Naive thymus-derived CD4-positive, alpha-beta T cell (primary cell): ENCODE measurements at regions of chr18 and their contacts with region 1.

Region 1: GRCh38 chr18:35040988-35041814 is at the start of gene MAPRE2:
- DNase-seq: peak; percentile 97 to 100 (median 99)
- ATAC-seq: peak; percentile 91
- H3K4me3 ChIP-seq: peak within 1 kb of the TSS; percentile 80
- H3K4me3 Mint-ChIP-seq: peak within 1 kb of the TSS; percentile 86 to 98 (median 97)
- H3K27ac ChIP-seq: peak within 1 kb of the TSS; percentile 95
- H3K27ac Mint-ChIP-seq: peak within 1 kb of the TSS; percentile 94 to 100 (median 98)
- H3K4me1 ChIP-seq: peaks cover 29 to 41% of the 10 kb centered on the region in 2 donors
- H3K4me1 Mint-ChIP-seq: peaks cover 31 to 73% (median 48%) of the 10 kb centered on the region in 7 donors
- H3K27me3 ChIP-seq: no peaks in the 10 kb centered on the region
- H3K27me3 Mint-ChIP-seq: peaks cover 0 to 3% (median 0%) of the 10 kb centered on the region in 5 donors
- total RNA-seq, gene MAPRE2: 44.7 to 84.4 (median 63.5) TPM

Region 2: DNA sequence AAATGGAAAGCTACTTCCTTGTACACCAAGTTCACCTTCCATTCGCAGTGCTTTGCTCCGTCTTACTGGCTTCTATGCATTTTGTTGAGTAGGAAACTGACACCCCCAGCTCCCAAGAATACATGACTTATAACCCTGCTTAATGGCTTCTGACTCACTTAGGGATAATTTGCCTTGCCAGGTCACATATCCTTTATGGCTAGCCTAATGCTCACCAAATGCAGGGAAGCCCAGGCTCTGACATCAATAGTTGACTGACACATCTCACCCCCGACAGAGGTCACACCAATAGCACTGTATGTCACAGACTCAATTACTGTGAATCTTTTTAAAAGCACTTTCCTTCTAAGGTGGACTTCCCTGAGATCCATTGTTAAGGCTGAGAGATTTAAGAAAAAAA is 183.9 kb before region 1 on chr18:
- CTCF ChIA-PET with region 1: no interaction called
- POLR2A ChIA-PET with region 1: no interaction called
- intact Hi-C with region 1: loop called (anchors 1 kb)
- DNase-seq: no peak
- ATAC-seq: no peak
- H3K4me3 ChIP-seq: no peak overlapping the region
- H3K4me3 Mint-ChIP-seq: no peak overlapping the region
- H3K27ac ChIP-seq: no peak overlapping the region
- H3K27ac Mint-ChIP-seq: no peak overlapping the region
- H3K4me1 ChIP-seq: no peaks in the 10 kb centered on the region
- H3K4me1 Mint-ChIP-seq: peaks cover 0 to 12% (median 8%) of the 10 kb centered on the region in 7 donors
- H3K27me3 ChIP-seq: no peaks in the 10 kb centered on the region
- H3K27me3 Mint-ChIP-seq: peaks cover 0 to 32% (median 0%) of the 10 kb centered on the region in 5 donors

Region 3: DNA sequence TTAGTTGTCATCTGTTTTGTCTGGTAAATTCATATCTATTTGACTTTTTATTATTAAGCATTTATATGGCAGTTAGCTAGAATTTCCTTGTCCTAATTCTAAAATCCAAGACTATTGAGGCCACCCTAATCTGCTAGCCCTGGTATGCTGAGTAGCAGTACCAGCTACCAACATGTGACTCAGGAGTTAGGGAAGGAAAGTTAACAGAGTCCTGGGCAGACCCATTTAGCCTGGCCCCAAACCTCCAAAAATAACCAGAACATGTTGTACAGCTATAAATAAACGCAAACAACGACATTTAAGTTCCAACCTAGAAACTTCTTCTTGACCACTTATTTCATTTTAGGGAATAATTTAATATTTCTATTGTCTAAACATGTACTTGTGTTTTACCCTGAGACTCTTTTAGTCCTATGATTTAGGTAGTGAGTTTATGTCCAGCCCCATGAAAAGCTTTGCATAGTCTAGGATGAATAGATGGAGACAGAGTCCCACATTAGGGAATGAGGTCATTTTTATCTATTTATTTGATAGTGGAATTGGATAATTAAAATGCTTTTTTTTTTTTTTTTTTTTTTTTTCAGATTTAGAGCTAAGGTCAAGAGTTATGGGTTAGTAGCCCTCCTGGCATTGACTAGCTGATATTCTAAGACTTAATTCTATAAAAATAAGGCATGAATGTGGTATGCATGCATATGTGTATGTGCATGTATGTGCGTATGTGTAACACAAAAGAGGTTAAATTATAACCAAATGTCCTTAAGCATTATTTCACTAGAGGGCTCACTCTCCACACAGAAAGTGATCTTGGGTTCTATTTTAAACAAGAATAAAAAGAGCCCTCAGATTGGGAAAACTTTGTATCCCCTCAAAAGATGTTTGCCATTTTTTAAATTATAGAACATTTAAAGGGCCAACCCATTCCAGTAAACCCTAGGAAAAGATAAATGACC is 160.0 kb before region 1 on chr18:
- CTCF ChIA-PET with region 1: no interaction called
- POLR2A ChIA-PET with region 1: no interaction called
- intact Hi-C with region 1: no loop called
- DNase-seq: no peak
- ATAC-seq: no peak
- H3K4me3 ChIP-seq: no peak overlapping the region
- H3K4me3 Mint-ChIP-seq: no peak overlapping the region
- H3K27ac ChIP-seq: no peak overlapping the region
- H3K27ac Mint-ChIP-seq: no peak overlapping the region
- H3K4me1 ChIP-seq: no peaks in the 10 kb centered on the region
- H3K4me1 Mint-ChIP-seq: peaks cover 0 to 1% (median 0%) of the 10 kb centered on the region in 7 donors
- H3K27me3 ChIP-seq: no peaks in the 10 kb centered on the region
- H3K27me3 Mint-ChIP-seq: peaks cover 0 to 4% (median 2%) of the 10 kb centered on the region in 5 donors

Region 4: GRCh38 chr18:35029770-35030169 is 11.4 kb before region 1 on chr18:
- CTCF ChIA-PET with region 1: interaction called, 89 read pairs
- POLR2A ChIA-PET with region 1: interaction called, 169 read pairs
- intact Hi-C with region 1: loop called (anchors 1 kb)
- DNase-seq: peak in 7 of 9 donors; percentile 34 to 58 (median 55)
- ATAC-seq: peak; percentile 65
- H3K4me3 ChIP-seq: peak overlapping the region; percentile 41
- H3K4me3 Mint-ChIP-seq: peak overlapping the region; percentile 78 to 93 (median 88)
- H3K27ac ChIP-seq: peak overlapping the region; percentile 79
- H3K27ac Mint-ChIP-seq: peak overlapping the region; percentile 89 to 98 (median 96)
- H3K4me1 ChIP-seq: peaks cover 34 to 53% of the 10 kb centered on the region in 2 donors
- H3K4me1 Mint-ChIP-seq: peaks cover 34 to 75% (median 69%) of the 10 kb centered on the region in 7 donors
- H3K27me3 ChIP-seq: no peaks in the 10 kb centered on the region
- H3K27me3 Mint-ChIP-seq: no peaks in the 10 kb centered on the region

Region 5: GRCh38 chr18:35110554-35111485 is 69.6 kb after region 1 on chr18:
- CTCF ChIA-PET with region 1: no interaction called
- POLR2A ChIA-PET with region 1: interaction called, 3 read pairs
- intact Hi-C with region 1: loop called in 1 of 2 experiments (anchors 1 kb)
- DNase-seq: no peak
- ATAC-seq: no peak
- H3K4me3 ChIP-seq: no peak overlapping the region
- H3K4me3 Mint-ChIP-seq: peak overlapping the region in 3 of 10 donors; percentile 14 to 45 (median 35)
- H3K27ac ChIP-seq: no peak overlapping the region
- H3K27ac Mint-ChIP-seq: peak overlapping the region in 4 of 9 donors; percentile 1 to 48 (median 20)
- H3K4me1 ChIP-seq: peaks cover 9 to 12% of the 10 kb centered on the region in 2 donors
- H3K4me1 Mint-ChIP-seq: peaks cover 8 to 81% (median 44%) of the 10 kb centered on the region in 7 donors
- H3K27me3 ChIP-seq: no peaks in the 10 kb centered on the region
- H3K27me3 Mint-ChIP-seq: no peaks in the 10 kb centered on the region

Region 6: DNA sequence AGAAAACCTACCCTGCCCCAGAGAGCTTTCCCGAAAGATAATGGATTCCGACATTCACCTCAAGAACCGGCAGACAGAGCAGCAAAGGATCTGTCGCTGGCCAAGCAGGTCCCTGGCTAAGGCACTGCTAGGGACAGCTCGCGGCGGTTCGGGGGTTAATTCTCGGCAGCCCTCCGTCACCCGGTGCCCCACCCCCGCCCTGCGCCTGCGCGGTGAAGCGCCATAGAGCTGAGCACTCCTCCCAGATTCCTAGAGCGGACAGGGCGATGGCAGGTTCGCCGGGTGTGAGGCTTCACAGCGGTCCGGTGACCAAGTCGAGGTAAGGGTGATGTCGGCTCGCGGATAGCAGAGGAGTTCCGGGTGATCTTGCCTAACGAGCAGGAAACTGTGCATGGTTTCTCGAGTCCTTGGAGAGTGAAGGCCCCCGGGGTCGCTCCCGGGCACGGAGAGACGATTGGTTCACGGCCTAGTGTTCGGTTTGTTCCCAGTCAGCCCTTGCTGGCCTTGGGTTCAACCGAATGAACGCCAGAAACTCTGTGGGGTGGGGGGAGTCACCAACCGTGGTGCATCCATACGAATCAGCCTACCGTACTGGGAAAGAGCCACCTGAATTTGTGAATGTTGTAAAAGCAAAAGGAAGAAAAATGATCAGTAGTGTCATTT is 249.0 kb after region 1 on chr18 and contains the start of gene ZSCAN30:
- CTCF ChIA-PET with region 1: no interaction called
- POLR2A ChIA-PET with region 1: no interaction called
- intact Hi-C with region 1: loop called (anchors 1 to 2 kb)
- DNase-seq: peak; percentile 90 to 96 (median 94)
- ATAC-seq: peak; percentile 99
- H3K4me3 ChIP-seq: peak within 1 kb of the TSS; percentile 90
- H3K4me3 Mint-ChIP-seq: peak within 1 kb of the TSS; percentile 97 to 99 (median 98)
- H3K27ac ChIP-seq: peak within 1 kb of the TSS; percentile 86
- H3K27ac Mint-ChIP-seq: peak within 1 kb of the TSS; percentile 94 to 100 (median 98)
- H3K4me1 ChIP-seq: peaks cover 16 to 18% of the 10 kb centered on the region in 2 donors
- H3K4me1 Mint-ChIP-seq: peaks cover 29 to 86% (median 75%) of the 10 kb centered on the region in 7 donors
- H3K27me3 ChIP-seq: no peaks in the 10 kb centered on the region
- H3K27me3 Mint-ChIP-seq: no peaks in the 10 kb centered on the region
- total RNA-seq, gene ZSCAN30: 14.0 to 23.2 (median 20.8) TPM

Region 7: DNA sequence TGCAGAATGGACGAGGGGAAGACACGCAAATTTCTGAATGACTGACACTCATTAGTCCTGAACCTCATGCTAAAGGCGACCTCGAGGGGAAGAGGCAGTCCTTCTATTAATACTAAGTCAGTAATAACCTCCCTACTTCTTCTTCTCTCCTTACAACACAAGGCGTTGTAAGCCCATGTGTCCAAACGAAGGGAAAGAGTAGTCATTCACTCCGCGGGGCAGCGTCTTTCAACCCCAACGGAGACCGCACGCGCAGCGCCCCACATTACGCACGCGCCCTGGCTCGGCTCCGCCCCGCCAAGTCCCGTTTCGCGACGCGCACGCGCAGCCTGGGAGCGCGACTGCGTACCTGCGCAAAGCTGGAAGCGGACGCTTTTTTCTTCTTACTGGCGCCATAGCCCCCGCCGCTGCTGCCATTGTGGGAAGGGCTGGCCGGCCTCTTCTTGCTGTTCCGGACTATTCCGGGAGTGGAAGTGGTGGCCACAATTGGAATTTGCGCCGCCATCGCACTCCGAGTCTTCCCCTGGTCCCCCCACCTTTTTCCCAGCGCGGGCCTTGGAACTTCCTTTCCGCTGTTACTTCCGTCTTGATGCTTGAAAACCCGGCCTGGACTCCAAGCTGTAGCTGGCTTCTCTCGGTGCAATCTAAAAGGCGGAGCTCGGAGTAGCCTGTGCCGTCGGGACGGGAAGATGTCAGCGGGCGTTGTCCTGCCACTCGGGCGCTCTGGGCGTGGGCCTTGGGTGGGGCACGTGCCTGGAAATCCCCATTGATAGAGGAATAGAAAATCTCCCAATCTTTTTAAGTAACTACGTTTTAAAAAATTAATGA is 456.4 kb after region 1 on chr18 and contains the start of gene INO80C:
- CTCF ChIA-PET with region 1: no interaction called
- POLR2A ChIA-PET with region 1: interaction called, 5 read pairs
- intact Hi-C with region 1: loop called (anchors 1 to 2 kb)
- DNase-seq: peak; percentile 87 to 94 (median 92)
- ATAC-seq: peak; percentile 93
- H3K4me3 ChIP-seq: peak within 1 kb of the TSS; percentile 96
- H3K4me3 Mint-ChIP-seq: peak within 1 kb of the TSS; percentile 84 to 100 (median 96)
- H3K27ac ChIP-seq: peak within 1 kb of the TSS; percentile 94
- H3K27ac Mint-ChIP-seq: peak within 1 kb of the TSS; percentile 96 to 100 (median 100)
- H3K4me1 ChIP-seq: peaks cover 9 to 12% of the 10 kb centered on the region in 2 donors
- H3K4me1 Mint-ChIP-seq: peaks cover 22 to 62% (median 51%) of the 10 kb centered on the region in 7 donors
- H3K27me3 ChIP-seq: no peaks in the 10 kb centered on the region
- H3K27me3 Mint-ChIP-seq: no peaks in the 10 kb centered on the region
- total RNA-seq, gene INO80C: 20.6 to 26.8 (median 25.7) TPM

Region 8: GRCh38 chr18:36067055-36067957 is 1026.1 kb after region 1 on chr18 and contains the start of gene RPRD1A:
- CTCF ChIA-PET with region 1: no interaction called
- POLR2A ChIA-PET with region 1: no interaction called
- intact Hi-C with region 1: loop called (anchors 5 kb)
- DNase-seq: peak; percentile 90 to 98 (median 94)
- ATAC-seq: peak; percentile 96
- H3K4me3 ChIP-seq: peak within 1 kb of the TSS; percentile 88
- H3K4me3 Mint-ChIP-seq: peak within 1 kb of the TSS; percentile 92 to 98 (median 96)
- H3K27ac ChIP-seq: peak within 1 kb of the TSS; percentile 79
- H3K27ac Mint-ChIP-seq: peak within 1 kb of the TSS; percentile 85 to 97 (median 94)
- H3K4me1 ChIP-seq: peaks cover 11 to 16% of the 10 kb centered on the region in 2 donors
- H3K4me1 Mint-ChIP-seq: peaks cover 26 to 50% (median 44%) of the 10 kb centered on the region in 7 donors
- H3K27me3 ChIP-seq: no peaks in the 10 kb centered on the region
- H3K27me3 Mint-ChIP-seq: peaks cover 0 to 5% (median 0%) of the 10 kb centered on the region in 5 donors
- total RNA-seq, gene RPRD1A: 22.6 to 51.3 (median 28.7) TPM